Activated CD8-positive, alpha-beta memory T cell treated with anti-CD3 and anti-CD28 coated beads, Interleukin-2, amount 10 ng/mL, durations not matched to agents 7 days and 5 days (primary cell): ENCODE measurements at regions of chr19 and their contacts with region 1.

Region 1: GRCh38 chr19:49869441-49870176 is 2.2 kb upstream of the PNKP start:
- DNase-seq: peak; percentile 97
- ATAC-seq: peak; percentile 85
- H3K4me3 Mint-ChIP-seq: no peak overlapping the region
- H3K27ac Mint-ChIP-seq: no peak overlapping the region
- H3K4me1 Mint-ChIP-seq: peaks cover 53% of the 10 kb centered on the region
- H3K27me3 Mint-ChIP-seq: no peaks in the 10 kb centered on the region

Region 2: DNA sequence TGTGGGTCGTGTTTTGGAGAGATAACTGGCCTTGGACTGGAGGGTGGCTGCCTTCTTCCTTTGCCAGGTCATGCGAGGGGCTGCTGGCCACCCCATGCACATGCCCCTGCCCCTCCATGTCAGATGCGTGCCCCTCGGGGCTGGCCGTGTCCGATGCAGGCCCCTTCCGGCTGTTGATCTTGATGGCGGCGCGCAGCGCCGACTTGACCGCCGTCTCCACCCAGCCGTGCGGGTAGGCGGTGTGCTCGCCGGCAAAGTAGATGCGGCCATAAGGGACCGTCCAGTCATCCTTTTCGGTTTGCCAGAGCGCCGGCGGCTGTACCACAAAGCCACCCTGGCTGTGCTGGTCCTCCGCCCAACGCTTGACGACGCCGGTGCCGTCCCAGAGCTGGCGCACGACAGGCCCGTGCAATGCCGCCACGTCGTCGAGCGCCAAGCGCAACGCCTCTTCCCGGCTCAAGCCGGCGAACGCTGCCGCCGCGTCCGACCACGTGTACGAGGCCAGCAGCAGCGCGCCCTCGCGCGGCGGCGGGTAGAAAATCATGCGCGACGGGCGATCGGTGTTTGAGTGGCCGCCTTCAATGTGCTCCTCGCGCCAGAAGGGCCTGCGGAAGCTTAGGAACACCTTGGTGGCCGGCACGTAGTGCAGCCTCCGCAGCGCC is 20.2 kb after region 1 on chr19:
- CTCF ChIA-PET with region 1: interaction called, 11 read pairs
- DNase-seq: peak; percentile 83
- ATAC-seq: peak; percentile 77
- H3K4me3 Mint-ChIP-seq: peak overlapping the region; percentile 71
- H3K27ac Mint-ChIP-seq: peak overlapping the region; percentile 43
- H3K4me1 Mint-ChIP-seq: peaks cover 7% of the 10 kb centered on the region
- H3K27me3 Mint-ChIP-seq: no peaks in the 10 kb centered on the region